Breast epithelium (tissue), 4 donors: ENCODE measurements at regions of chr5 and their contacts with region 1.

Region 1: DNA sequence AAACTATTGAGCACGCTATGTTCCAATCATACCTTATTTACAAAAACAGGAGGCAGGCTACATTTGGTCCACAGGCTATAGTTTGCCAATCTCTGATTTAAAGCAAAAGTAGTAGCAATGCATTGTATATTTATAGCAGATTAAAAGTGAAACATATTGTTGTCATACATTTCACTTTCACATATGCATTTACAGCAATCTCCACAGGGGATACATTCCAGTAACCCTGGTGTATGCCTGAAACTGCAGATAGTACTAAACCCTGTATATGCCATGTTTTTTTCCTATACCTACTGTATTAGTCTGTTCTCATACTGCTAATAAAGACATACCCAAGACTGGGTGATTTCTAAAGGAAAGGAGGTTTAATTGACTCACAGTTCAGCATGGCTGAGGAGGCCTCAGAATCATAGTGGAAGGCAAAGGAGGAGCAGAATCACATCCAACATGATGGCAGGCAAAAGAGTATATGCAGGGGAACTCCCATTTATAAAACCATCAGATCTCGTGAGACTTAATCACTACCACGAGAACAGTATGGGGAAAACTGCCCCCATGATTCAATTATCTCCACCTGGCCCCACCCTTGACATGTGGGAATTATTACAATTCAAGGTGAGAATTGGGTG is 5.9 kb upstream of the CSF1R start:
- DNase-seq: no peak
- H3K4me3 ChIP-seq: no peak overlapping the region
- H3K27ac ChIP-seq: no peak overlapping the region
- H3K4me1 ChIP-seq: no peaks in the 10 kb centered on the region
- H3K27me3 ChIP-seq: no peaks in the 10 kb centered on the region
- CTCF ChIP-seq: no peak
- POLR2A ChIP-seq: no peak

Region 2: DNA sequence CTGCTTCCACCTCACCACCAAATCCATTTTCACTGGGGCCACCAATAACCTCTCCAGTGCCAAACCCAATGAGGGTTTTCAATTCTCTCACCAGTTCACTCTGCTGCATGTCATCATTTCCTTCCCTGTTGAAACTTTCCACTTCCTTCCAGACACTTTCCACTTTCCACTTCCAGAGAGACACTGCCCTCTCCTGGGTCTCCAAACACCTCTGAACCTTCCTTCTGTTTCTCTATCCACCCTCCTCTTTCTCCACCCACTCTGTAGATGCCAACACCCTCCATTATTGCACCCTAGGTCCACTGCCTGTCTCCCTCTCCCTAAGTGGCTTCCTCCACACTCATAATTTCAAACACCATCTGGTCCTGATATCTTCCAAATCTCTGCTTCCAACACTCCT is 187.3 kb before region 1 on chr5:
- intact Hi-C with region 1: loop called (anchors 5 kb)
- DNase-seq: no peak
- H3K4me3 ChIP-seq: no peak overlapping the region
- H3K27ac ChIP-seq: no peak overlapping the region
- H3K4me1 ChIP-seq: no peaks in the 10 kb centered on the region
- H3K27me3 ChIP-seq: no peaks in the 10 kb centered on the region
- CTCF ChIP-seq: no peak
- POLR2A ChIP-seq: no peak

Region 3: DNA sequence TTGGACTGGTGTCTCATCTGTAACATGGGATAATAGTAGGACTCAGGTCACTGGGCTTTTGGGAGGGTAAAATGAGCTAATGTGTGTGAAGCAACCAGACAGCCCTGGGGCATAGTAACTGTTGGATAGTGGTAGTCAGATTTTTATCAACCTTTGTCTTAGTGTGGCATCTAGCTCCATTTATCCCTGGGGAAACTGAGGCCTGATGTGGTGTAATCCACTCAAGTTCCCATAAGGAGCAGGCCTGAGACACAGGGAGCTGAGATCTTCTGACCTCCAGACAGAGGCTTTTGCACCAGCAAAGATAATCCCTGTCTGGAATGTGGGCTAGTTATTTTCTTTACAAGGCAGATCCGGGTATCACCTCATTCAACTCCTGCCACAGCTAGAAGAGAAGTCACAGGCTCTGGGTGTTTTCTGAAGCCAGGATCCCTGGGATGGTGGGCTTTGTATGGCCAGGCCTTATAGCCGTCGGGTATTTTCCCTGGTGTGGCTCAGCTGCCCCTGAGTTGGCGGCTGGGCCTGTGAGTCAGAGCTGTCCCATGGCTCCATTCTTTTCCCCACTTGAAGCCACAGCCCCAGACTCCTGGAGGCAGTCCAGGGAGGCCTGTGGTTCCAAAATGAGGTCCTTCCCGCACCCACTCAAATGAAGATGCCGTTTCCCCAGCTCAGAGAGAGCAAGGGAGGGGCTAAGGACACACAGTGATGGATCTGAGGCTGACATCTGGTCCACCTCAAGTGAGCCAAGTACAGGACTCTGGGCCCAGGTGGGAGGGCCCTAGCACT is 20.2 kb after region 1 on chr5:
- intact Hi-C with region 1: no loop called
- DNase-seq: peak in 1 of 2 donors; percentile 29
- H3K4me3 ChIP-seq: no peak overlapping the region
- H3K27ac ChIP-seq: peak overlapping the region; percentile 73 to 88
- H3K4me1 ChIP-seq: peaks cover 0 to 3% of the 10 kb centered on the region in 2 donors
- H3K27me3 ChIP-seq: no peaks in the 10 kb centered on the region
- CTCF ChIP-seq: no peak
- POLR2A ChIP-seq: no peak